CD8-positive, alpha-beta T cell (primary cell): ENCODE measurements at regions of chr12 and their contacts with region 1.

Region 1: DNA sequence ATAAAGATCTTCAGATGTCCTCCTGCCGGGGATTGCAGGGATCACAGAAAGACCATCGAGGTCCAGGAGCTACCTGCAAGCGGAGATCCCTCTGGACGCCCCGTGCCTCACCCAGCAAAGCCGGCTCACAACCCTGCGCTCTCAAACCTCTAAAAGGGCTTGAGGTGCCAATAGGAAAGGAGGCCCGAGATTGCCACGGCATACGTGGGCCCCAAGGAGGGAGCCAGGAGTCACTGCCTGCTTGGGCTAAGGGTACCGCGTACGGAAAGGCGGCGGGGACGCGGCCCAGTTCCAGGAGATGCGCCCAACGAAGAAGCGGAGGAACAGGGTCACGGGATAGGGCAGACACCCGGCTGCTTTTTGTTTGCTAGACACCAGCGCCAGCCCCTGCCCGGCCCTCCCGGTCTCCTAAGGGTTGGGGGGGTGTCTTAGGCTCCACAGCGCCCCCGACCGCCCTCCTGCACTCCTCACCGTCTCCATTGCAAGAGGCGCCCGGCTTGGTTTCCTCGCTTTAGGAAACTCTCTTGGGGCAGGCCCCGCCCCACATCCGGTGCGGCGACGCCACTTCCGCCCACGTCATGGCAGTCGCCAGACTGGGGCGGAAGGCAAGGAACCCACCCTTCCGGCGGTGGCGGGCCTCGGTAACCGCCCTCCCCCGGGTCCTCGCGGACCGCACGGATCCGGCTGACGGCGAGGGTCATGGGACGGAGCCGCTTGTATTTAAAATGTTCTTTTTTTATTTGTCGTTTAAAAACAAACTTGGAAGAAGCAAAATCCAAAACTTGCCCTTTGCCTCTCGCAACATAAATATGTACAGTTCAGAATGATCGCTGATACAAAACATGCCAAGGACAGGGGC is at the start of gene PRKAG1:
- DNase-seq: peak; percentile 95 to 99 (median 96)
- ATAC-seq: peak; percentile 90
- H3K4me3 ChIP-seq: peak within 1 kb of the TSS; percentile 82 to 85
- H3K4me3 Mint-ChIP-seq: peak within 1 kb of the TSS; percentile 95
- H3K27ac ChIP-seq: peak within 1 kb of the TSS; percentile 97 to 98
- H3K27ac Mint-ChIP-seq: peak within 1 kb of the TSS; percentile 99
- H3K4me1 ChIP-seq: peaks cover 25% of the 10 kb centered on the region
- H3K4me1 Mint-ChIP-seq: peaks cover 38% of the 10 kb centered on the region
- H3K27me3 ChIP-seq: no peaks in the 10 kb centered on the region
- H3K27me3 Mint-ChIP-seq: no peaks in the 10 kb centered on the region
- CTCF ChIP-seq: peak; percentile 61
- total RNA-seq, gene PRKAG1: 30.2 to 34.3 TPM

Region 2: DNA sequence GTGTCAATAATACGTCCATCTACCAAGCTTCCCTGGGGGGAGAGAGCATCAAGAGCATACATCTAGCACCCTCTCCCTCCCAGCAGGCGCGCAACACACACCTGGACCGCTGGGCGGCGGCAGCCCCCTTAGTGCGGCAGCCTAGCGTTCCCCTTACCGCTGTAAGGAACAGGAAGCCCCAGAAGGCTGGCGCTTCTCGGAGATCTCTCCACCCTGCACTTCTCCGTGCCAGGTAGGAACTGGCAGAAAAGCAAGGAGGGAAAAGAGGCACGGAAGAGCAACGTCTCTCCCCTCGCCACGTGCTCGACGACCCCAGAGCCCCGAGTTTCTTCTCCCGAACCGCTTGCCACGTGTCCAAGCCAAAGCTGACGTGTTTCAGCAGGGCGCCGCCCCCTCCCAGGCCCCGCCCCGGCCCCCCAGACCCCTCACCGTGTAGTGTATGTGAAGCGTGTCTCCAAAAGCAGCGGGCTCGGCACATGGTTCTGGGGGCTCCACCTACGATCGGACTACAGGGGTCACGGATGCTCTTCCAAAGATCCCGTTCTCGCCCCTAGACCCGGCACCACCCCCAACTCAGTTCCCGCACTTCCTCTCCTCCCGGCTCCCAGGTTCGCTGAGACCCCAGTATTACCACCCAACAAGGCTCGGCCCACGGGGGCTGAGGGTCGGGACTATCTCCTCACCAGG is 93.7 kb before region 1 on chr12:
- CTCF ChIA-PET with region 1: no interaction called
- POLR2A ChIA-PET with region 1: no interaction called
- intact Hi-C with region 1: loop called in 1 of 2 experiments (anchors 1 kb)
- DNase-seq: peak; percentile 65 to 90 (median 83)
- ATAC-seq: peak; percentile 69
- H3K4me3 ChIP-seq: peak overlapping the region; percentile 96 to 99
- H3K4me3 Mint-ChIP-seq: peak overlapping the region; percentile 97
- H3K27ac ChIP-seq: peak overlapping the region; percentile 94
- H3K27ac Mint-ChIP-seq: peak overlapping the region; percentile 97
- H3K4me1 ChIP-seq: peaks cover 24% of the 10 kb centered on the region
- H3K4me1 Mint-ChIP-seq: peaks cover 46% of the 10 kb centered on the region
- H3K27me3 ChIP-seq: no peaks in the 10 kb centered on the region
- H3K27me3 Mint-ChIP-seq: no peaks in the 10 kb centered on the region
- CTCF ChIP-seq: peak; percentile 78

Region 3: GRCh38 chr12:48977315-48978281 is 40.9 kb before region 1 on chr12:
- CTCF ChIA-PET with region 1: interaction called, 7 read pairs
- POLR2A ChIA-PET with region 1: no interaction called
- intact Hi-C with region 1: loop called in 1 of 2 experiments (anchors 5 kb)
- DNase-seq: peak; percentile 59 to 92 (median 84)
- ATAC-seq: peak; percentile 55
- H3K4me3 ChIP-seq: peak overlapping the region; percentile 60 to 77
- H3K4me3 Mint-ChIP-seq: peak overlapping the region; percentile 63
- H3K27ac ChIP-seq: no peak overlapping the region
- H3K27ac Mint-ChIP-seq: peak overlapping the region; percentile 76
- H3K4me1 ChIP-seq: peaks cover 44% of the 10 kb centered on the region
- H3K4me1 Mint-ChIP-seq: peaks cover 46% of the 10 kb centered on the region
- H3K27me3 ChIP-seq: peaks cover 14% of the 10 kb centered on the region in 2 experiments
- H3K27me3 Mint-ChIP-seq: peaks cover 28% of the 10 kb centered on the region
- CTCF ChIP-seq: peak; percentile 92

Region 4: GRCh38 chr12:49043856-49044258 is 25.4 kb after region 1 on chr12:
- CTCF ChIA-PET with region 1: interaction called, 14 read pairs
- POLR2A ChIA-PET with region 1: interaction called, 4 read pairs
- intact Hi-C with region 1: loop called in 1 of 2 experiments (anchors 2 kb)
- DNase-seq: peak; percentile 67 to 90 (median 84)
- ATAC-seq: peak; percentile 87
- H3K4me3 ChIP-seq: no peak overlapping the region
- H3K4me3 Mint-ChIP-seq: no peak overlapping the region
- H3K27ac ChIP-seq: peak overlapping the region; percentile 29 to 55
- H3K27ac Mint-ChIP-seq: peak overlapping the region; percentile 24
- H3K4me1 ChIP-seq: no peaks in the 10 kb centered on the region
- H3K4me1 Mint-ChIP-seq: peaks cover 10% of the 10 kb centered on the region
- H3K27me3 ChIP-seq: no peaks in the 10 kb centered on the region
- H3K27me3 Mint-ChIP-seq: no peaks in the 10 kb centered on the region
- CTCF ChIP-seq: peak; percentile 77

Region 5: DNA sequence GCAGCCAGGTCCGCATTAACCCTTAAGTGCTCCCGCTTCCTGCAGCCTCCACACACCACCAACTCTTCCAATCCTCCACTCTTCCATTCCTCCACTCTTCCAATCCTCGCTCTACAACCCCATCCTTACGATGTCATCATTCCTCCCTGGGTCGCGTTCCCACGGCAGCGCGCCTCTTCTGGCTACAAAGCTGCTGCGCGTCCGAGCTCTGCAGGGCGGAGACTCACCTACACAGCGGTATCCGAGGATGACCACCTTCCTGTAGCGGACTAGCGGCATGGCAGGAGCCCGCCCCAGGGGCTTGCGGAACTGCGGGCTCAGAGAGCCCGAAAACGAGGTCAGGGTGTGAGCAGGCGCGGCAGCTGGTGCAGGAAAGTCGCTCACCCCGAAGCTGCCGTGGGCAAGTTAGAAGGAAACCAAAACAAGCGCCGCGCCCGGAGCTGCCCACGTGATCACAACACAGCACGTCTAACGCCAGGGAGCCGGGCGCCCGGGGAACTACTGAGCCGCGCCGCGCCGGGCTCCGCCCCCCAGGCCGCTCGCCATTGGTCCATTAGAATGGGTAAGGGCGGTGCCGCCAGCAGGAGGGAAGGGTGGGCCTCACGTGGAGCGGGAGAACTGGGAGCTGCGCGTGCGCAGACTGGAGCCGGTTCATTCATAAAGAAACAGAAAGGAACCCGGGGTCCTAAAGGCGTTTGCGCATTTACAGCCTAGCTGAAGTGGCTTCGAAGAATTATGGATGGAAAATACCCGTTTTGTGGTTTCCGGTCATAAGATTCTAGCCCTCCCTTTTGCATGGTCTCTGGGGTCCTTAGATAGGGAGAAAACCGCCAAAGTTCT is 51.2 kb after region 1 on chr12 and contains the start of gene RHEBL1:
- CTCF ChIA-PET with region 1: interaction called, 7 read pairs
- POLR2A ChIA-PET with region 1: interaction called, 5 read pairs
- intact Hi-C with region 1: loop called in 1 of 2 experiments (anchors 1 kb)
- DNase-seq: peak; percentile 96 to 99 (median 98)
- ATAC-seq: peak; percentile 99
- H3K4me3 ChIP-seq: peak within 1 kb of the TSS; percentile 79 to 90
- H3K4me3 Mint-ChIP-seq: peak within 1 kb of the TSS; percentile 96
- H3K27ac ChIP-seq: peak within 1 kb of the TSS; percentile 64 to 81
- H3K27ac Mint-ChIP-seq: peak within 1 kb of the TSS; percentile 89
- H3K4me1 ChIP-seq: peaks cover 9% of the 10 kb centered on the region
- H3K4me1 Mint-ChIP-seq: peaks cover 18% of the 10 kb centered on the region
- H3K27me3 ChIP-seq: no peaks in the 10 kb centered on the region
- H3K27me3 Mint-ChIP-seq: no peaks in the 10 kb centered on the region
- CTCF ChIP-seq: no peak
- total RNA-seq, gene RHEBL1: 4.7 to 5.6 TPM

Region 6: DNA sequence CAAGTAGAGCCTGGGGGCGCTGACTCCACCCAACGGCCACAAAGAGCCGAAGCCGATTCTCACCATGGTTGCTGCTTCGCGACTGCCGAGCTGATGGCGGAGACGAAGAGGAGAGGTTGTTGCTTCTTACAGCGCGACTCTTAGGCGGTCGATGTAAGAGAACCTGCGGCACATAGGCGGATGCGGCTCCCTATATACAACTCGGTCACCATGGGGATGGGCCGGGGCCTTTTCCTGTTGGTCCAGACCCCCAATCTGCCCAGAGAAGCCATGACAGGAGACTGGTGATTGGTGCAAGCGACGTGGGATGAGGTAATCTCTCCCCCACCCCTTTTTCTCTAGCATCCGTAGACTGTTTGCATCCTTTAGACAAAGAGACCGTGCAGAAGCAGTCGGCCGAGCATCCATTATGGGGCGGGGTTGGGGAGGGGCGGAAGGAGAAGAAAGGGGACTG is 170.5 kb after region 1 on chr12 and contains the start of gene TUBA1A:
- CTCF ChIA-PET with region 1: no interaction called
- POLR2A ChIA-PET with region 1: no interaction called
- intact Hi-C with region 1: loop called in 1 of 2 experiments (anchors 5 kb)
- DNase-seq: peak; percentile 90 to 99 (median 96)
- ATAC-seq: peak; percentile 85
- H3K4me3 ChIP-seq: peak within 1 kb of the TSS; percentile 90 to 98
- H3K4me3 Mint-ChIP-seq: peak within 1 kb of the TSS; percentile 97
- H3K27ac ChIP-seq: peak within 1 kb of the TSS; percentile 100
- H3K27ac Mint-ChIP-seq: peak within 1 kb of the TSS; percentile 100
- H3K4me1 ChIP-seq: peaks cover 14% of the 10 kb centered on the region
- H3K4me1 Mint-ChIP-seq: peaks cover 14% of the 10 kb centered on the region
- H3K27me3 ChIP-seq: no peaks in the 10 kb centered on the region
- H3K27me3 Mint-ChIP-seq: no peaks in the 10 kb centered on the region
- CTCF ChIP-seq: no peak
- total RNA-seq, gene TUBA1A: 209 to 225 TPM

Region 7: GRCh38 chr12:49538510-49539403 is 520.3 kb after region 1 on chr12 and contains the start of gene KCNH3:
- CTCF ChIA-PET with region 1: no interaction called
- POLR2A ChIA-PET with region 1: no interaction called
- intact Hi-C with region 1: loop called in 1 of 2 experiments (anchors 2 kb)
- DNase-seq: peak; percentile 79 to 95 (median 91)
- ATAC-seq: peak; percentile 90
- H3K4me3 ChIP-seq: peak within 1 kb of the TSS; percentile 49 to 76
- H3K4me3 Mint-ChIP-seq: peak within 1 kb of the TSS; percentile 80
- H3K27ac ChIP-seq: no peak within 1 kb of the TSS
- H3K27ac Mint-ChIP-seq: no peak within 1 kb of the TSS
- H3K4me1 ChIP-seq: peaks cover 23% of the 10 kb centered on the region
- H3K4me1 Mint-ChIP-seq: peaks cover 33% of the 10 kb centered on the region
- H3K27me3 ChIP-seq: peaks cover 0 to 6% of the 10 kb centered on the region in 2 experiments
- H3K27me3 Mint-ChIP-seq: no peaks in the 10 kb centered on the region
- CTCF ChIP-seq: no peak
- total RNA-seq, gene KCNH3: 3.1 to 3.5 TPM

Region 8: DNA sequence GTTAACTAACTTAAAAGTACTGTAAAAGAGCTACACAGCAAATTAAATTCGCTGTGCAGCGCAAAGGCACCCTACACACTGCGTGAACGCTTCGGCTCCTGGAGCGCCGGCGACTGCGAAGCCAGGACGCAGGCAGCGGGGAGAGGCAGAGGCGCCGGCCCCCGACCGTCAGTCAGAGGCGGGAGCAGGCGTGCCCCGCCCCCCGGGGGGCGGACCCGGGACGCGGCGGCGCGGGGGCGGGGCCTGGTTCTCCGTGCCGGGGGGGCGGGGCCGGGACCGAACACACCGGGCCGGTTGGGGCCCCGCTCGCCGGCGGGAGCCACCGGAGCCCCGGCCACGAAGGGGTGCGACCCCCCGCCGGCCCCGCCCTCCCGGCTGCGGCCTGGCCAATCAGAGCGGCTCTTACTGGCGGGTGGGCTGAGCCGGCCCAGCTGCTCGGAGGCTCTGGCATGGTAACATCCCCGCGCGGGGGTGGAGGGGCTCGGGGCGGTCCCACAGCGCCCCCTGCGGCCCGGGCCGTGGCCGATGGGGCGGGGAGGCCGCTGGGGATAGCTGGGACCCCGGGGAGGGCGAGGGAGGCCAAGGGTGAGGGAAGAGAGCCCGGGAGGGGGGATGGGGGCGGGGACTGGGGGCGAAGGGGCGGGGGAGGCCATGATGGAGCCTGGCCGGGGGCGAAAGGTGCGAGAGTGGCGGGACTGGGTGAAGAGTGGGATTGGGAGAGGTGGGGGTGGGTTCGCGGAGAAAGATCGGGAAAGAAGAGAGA is 604.8 kb after region 1 on chr12 and contains the start of gene PRPF40B:
- CTCF ChIA-PET with region 1: no interaction called
- POLR2A ChIA-PET with region 1: no interaction called
- intact Hi-C with region 1: no loop called
- DNase-seq: peak; percentile 68 to 92 (median 84)
- ATAC-seq: peak; percentile 78
- H3K4me3 ChIP-seq: peak within 1 kb of the TSS; percentile 56 to 82
- H3K4me3 Mint-ChIP-seq: peak within 1 kb of the TSS; percentile 88
- H3K27ac ChIP-seq: peak within 1 kb of the TSS; percentile 56 to 63
- H3K27ac Mint-ChIP-seq: peak within 1 kb of the TSS; percentile 91
- H3K4me1 ChIP-seq: peaks cover 34% of the 10 kb centered on the region
- H3K4me1 Mint-ChIP-seq: peaks cover 27% of the 10 kb centered on the region
- H3K27me3 ChIP-seq: no peaks in the 10 kb centered on the region
- H3K27me3 Mint-ChIP-seq: no peaks in the 10 kb centered on the region
- CTCF ChIP-seq: peak; percentile 46
- total RNA-seq, gene PRPF40B: 3.4 to 4.2 TPM